Activated CD8-positive, alpha-beta memory T cell treated with anti-CD3 and anti-CD28 coated beads, Interleukin-2, amount 10 ng/mL, durations not matched to agents 7 days and 5 days (primary cell): ENCODE measurements at regions of chr20 and their contacts with region 1.

Region 1: GRCh38 chr20:49936153-49937027 is at the start of gene RNF114:
- DNase-seq: peak; percentile 92
- ATAC-seq: peak; percentile 89
- H3K4me3 Mint-ChIP-seq: peak within 1 kb of the TSS; percentile 94
- H3K27ac Mint-ChIP-seq: peak within 1 kb of the TSS; percentile 93
- H3K4me1 Mint-ChIP-seq: peaks cover 49% of the 10 kb centered on the region
- H3K27me3 Mint-ChIP-seq: no peaks in the 10 kb centered on the region
- total RNA-seq, gene RNF114: 65.2 to 74.4 TPM

Region 2: GRCh38 chr20:49915378-49916145 is 20.8 kb before region 1 on chr20 and contains the start of gene SPATA2:
- CTCF ChIA-PET with region 1: interaction called, 15 read pairs
- DNase-seq: peak; percentile 97
- ATAC-seq: peak; percentile 81
- H3K4me3 Mint-ChIP-seq: peak within 1 kb of the TSS; percentile 100
- H3K27ac Mint-ChIP-seq: peak within 1 kb of the TSS; percentile 100
- H3K4me1 Mint-ChIP-seq: peaks cover 37% of the 10 kb centered on the region
- H3K27me3 Mint-ChIP-seq: no peaks in the 10 kb centered on the region
- total RNA-seq, gene SPATA2: 10.2 to 11.1 TPM